ENCODE measurements at regions of chr11 and their contacts with region 1.

Region 1: DNA sequence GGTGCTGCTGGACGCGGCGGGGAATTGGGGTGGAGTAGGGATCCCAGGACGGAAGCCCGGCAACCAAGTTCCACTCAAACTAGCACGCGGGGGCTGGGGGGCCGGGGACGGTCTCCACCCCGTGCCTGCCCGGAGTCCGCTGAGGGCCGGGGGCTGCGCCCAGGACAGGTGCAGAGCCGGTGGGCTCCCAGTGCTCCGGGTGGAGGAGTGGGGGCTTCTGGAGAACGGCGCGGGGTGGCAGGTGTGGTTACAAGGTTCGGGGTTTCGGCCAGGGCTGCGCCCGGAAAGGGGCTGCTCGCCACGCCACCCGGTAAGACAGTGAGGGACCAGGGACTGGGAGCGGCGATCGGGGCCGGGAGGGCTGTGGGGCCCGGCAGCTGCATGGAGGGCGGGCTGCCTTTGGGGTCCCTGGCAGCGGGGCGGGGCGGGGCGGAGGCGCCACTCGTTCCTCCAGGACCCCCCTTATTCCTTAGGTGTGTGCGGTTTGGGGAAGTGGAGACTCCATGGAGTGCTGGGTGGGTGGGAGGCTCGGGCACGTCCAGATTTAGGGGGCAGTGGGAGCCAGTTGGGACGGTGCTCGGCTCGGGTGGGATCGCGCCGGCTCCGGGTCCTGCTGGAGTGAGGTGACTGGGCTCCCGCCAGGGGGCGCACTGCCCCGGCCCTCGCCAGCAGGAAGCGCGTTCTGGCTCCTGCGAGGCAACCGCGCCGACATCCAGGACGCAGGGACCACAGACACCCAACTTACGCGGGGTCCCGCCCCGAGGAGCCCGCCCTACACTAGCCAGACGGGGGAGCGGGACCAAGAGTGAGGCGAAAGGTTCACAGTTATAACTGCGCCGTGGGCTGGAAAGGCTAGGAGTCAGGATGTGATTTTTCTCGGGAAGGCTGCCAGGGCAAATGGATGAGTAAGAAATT is 868 bp downstream of the TSPAN18 start:
- DNase-seq: peak; percentile 87
- H3K4me3 ChIP-seq: peak overlapping the region; percentile 96
- H3K27ac ChIP-seq: peak overlapping the region; percentile 95
- H3K4me1 ChIP-seq: peaks cover 71% of the 10 kb centered on the region
- H3K27me3 ChIP-seq: no peaks in the 10 kb centered on the region
- CTCF ChIP-seq: peak; percentile 98

Region 2: GRCh38 chr11:44634401-44635281 is 93.0 kb before region 1 on chr11:
- intact Hi-C with region 1: loop called (anchors 5 kb)
- DNase-seq: peak; percentile 74
- H3K4me3 ChIP-seq: peak overlapping the region; percentile 35
- H3K27ac ChIP-seq: peak overlapping the region; percentile 4
- H3K4me1 ChIP-seq: peaks cover 45% of the 10 kb centered on the region
- H3K27me3 ChIP-seq: no peaks in the 10 kb centered on the region
- CTCF ChIP-seq: no peak

Region 3: GRCh38 chr11:44775366-44775984 is 47.8 kb after region 1 on chr11:
- intact Hi-C with region 1: loop called (anchors 10 kb)
- DNase-seq: peak; percentile 53
- H3K4me3 ChIP-seq: no peak overlapping the region
- H3K27ac ChIP-seq: peak overlapping the region; percentile 89
- H3K4me1 ChIP-seq: peaks cover 98% of the 10 kb centered on the region
- H3K27me3 ChIP-seq: no peaks in the 10 kb centered on the region
- CTCF ChIP-seq: peak; percentile 75

Region 4: GRCh38 chr11:44785856-44786606 is 58.4 kb after region 1 on chr11:
- intact Hi-C with region 1: no loop called
- DNase-seq: no peak
- H3K4me3 ChIP-seq: no peak overlapping the region
- H3K27ac ChIP-seq: peak overlapping the region; percentile 61
- H3K4me1 ChIP-seq: peaks cover 80% of the 10 kb centered on the region
- H3K27me3 ChIP-seq: no peaks in the 10 kb centered on the region
- CTCF ChIP-seq: peak; percentile 31

Region 5: GRCh38 chr11:44893846-44894617 is 166.4 kb after region 1 on chr11:
- intact Hi-C with region 1: loop called (anchors 5 kb)
- DNase-seq: peak; percentile 70
- H3K4me3 ChIP-seq: no peak overlapping the region
- H3K27ac ChIP-seq: peak overlapping the region; percentile 17
- H3K4me1 ChIP-seq: peaks cover 36% of the 10 kb centered on the region
- H3K27me3 ChIP-seq: no peaks in the 10 kb centered on the region
- CTCF ChIP-seq: peak; percentile 93